ENCODE measurements at regions of chr11 and their contacts with region 1.

Region 1: DNA sequence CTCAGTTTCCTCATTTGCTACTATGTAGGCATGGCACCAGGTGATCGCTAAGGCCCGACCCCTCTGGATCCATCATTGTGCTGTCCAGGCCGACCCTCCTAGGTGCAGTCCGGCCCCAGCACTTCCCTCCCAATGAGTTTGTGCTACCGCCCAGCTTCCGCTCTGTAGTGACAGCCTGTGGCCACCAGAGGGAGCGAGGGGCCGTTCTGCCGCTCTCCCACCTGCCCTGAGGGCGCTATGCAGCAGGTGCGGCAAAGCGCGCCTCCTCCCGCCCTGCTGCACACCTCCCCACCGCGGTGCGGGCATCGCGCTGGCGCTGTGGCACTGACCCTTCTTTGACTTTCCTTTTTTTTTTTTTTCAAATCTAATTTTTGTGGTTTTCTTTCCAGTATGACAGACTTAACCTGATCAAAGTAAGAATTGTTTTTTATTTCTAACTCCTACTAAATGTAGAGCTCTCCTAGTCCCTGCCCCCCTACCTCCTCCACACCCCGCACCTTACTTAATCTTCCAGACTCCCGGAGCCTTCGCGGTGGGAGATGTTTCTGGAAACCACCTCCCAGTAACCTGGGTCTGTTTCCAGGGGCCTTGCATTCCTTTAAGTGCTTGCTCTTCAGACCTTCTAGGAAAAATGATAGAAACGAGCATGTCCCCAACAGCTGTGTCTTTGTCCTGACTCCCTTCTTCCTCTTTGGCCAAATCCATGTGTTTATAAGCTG is 73.7 kb downstream of the SCN3B start:
- DNase-seq: peak; percentile 77
- ATAC-seq: peak; percentile 86
- H3K4me3 Mint-ChIP-seq: no peak overlapping the region
- H3K27ac Mint-ChIP-seq: no peak overlapping the region
- H3K4me1 Mint-ChIP-seq: peaks cover 15% of the 10 kb centered on the region
- H3K27me3 Mint-ChIP-seq: no peaks in the 10 kb centered on the region

Region 2: DNA sequence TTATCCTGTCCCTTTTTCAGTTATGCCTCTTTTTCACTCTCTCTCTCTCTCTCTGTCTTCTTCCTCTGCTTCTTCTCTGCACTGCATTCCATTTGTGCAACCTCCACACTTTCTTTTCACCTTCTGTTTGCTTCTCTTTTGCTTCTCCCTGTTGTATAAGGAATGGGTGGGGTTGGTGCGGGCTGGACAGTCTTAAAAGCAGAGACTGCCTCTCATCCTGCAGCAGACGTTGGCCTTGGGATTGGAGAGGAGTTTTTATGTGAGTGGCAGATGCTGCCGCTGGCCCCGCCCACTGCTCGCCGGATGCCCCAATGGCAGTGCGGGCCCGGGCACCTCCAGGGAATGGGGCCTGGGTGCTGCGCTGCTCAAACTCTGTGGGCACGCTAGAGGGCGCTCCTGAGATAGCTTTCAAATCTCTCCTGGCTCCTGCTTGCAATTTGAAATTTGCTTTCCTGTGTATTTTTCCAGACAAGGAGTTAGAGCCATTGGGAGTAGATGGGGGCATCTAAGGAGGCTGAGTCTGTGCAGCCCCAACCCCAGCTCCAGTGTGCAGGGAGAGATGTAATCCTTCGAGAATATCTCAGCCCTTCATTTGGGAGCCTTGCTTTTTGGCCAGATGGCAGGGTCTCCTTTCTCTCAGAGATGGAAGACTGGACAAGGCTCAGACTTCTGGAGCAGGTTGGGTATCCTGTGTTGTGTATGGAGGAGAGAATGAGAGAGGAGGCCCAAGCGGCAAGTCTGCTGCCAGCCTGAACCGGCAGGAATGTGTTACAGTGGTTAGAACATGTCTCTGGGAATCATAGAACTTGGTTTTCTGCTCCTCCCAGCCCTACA is 69.5 kb before region 1 on chr11:
- CTCF ChIA-PET with region 1: interaction called, 16 read pairs
- POLR2A ChIA-PET with region 1: no interaction called
- DNase-seq: peak; percentile 79
- ATAC-seq: peak; percentile 97
- H3K4me3 Mint-ChIP-seq: no peak overlapping the region
- H3K27ac Mint-ChIP-seq: peak overlapping the region; percentile 44
- H3K4me1 Mint-ChIP-seq: peaks cover 21% of the 10 kb centered on the region
- H3K27me3 Mint-ChIP-seq: no peaks in the 10 kb centered on the region

Region 3: DNA sequence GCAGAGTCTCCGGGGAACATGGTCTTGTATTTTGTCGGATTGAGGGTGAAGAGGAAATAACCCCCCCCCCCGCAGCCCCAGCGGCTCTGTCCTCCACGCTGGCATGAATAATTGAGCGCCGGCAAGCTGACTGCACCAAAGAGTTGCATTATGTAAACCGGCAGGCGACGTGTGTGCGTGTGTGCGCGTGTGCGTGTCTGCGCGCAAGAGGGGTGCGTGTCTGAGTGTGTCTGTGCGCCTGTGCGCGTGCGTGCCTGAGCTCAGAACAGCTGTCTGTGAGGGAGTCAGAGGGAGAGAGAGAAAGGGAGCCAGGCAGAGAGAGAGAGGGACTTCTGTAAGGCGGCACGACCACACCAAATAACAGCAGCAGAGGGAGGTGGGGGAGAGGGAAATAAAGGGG is 20.7 kb before region 1 on chr11:
- CTCF ChIA-PET with region 1: interaction called, 13 read pairs
- POLR2A ChIA-PET with region 1: no interaction called
- DNase-seq: peak; percentile 52
- ATAC-seq: peak; percentile 79
- H3K4me3 Mint-ChIP-seq: peak overlapping the region; percentile 32
- H3K27ac Mint-ChIP-seq: peak overlapping the region; percentile 31
- H3K4me1 Mint-ChIP-seq: peaks cover 12% of the 10 kb centered on the region
- H3K27me3 Mint-ChIP-seq: peaks cover 2% of the 10 kb centered on the region

Region 4: DNA sequence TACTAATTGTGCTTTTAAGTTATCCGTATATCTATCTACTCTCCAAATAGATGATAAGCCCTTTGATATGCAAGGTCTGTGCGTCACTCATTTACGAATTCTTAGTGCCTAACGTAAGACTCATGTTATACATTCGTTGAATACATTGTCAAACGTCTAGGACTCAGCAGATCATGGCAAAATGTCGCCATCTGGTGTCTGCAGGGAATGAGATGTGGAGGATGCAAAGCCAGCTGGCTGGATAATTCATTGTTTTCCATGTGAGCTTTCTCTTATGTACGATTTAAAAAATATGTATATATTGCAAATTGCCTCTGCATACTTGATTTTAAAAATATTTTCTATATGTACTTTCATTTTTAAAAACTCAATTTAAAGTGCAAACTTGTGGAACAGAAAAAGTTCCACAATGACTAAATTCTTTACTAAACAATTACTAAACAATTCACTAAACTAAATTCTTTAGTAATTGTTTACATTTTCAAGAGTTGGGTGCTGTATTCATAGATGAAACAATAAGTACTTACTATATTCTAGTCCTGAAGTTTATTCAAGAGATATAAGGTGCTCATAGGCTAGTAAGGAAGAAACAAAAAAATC is 127.0 kb after region 1 on chr11:
- CTCF ChIA-PET with region 1: interaction called, 24 read pairs
- POLR2A ChIA-PET with region 1: no interaction called
- DNase-seq: peak; percentile 70
- ATAC-seq: peak; percentile 65
- H3K4me3 Mint-ChIP-seq: no peak overlapping the region
- H3K27ac Mint-ChIP-seq: no peak overlapping the region
- H3K4me1 Mint-ChIP-seq: no peaks in the 10 kb centered on the region
- H3K27me3 Mint-ChIP-seq: peaks cover 6% of the 10 kb centered on the region

Region 5: GRCh38 chr11:123800036-123800435 is 219.3 kb after region 1 on chr11:
- CTCF ChIA-PET with region 1: no interaction called
- POLR2A ChIA-PET with region 1: no interaction called
- DNase-seq: no peak
- ATAC-seq: no peak
- H3K4me3 Mint-ChIP-seq: no peak overlapping the region
- H3K27ac Mint-ChIP-seq: no peak overlapping the region
- H3K4me1 Mint-ChIP-seq: no peaks in the 10 kb centered on the region
- H3K27me3 Mint-ChIP-seq: no peaks in the 10 kb centered on the region

Measured in activated CD8-positive, alpha-beta T cell treated with anti-CD3 and anti-CD28 coated beads, Interleukin-2, amount 10 ng/mL, durations not matched to agents 7 days and 5 days (primary cell).